AG04450 (cell line): ENCODE measurements at regions of chr3 and their contacts with region 1.

Region 1: GRCh38 chr3:120417272-120417911 is 33.4 kb downstream of the FSTL1 start:
- DNase-seq: peak; percentile 97
- H3K4me3 ChIP-seq: peak overlapping the region; percentile 32
- H3K27ac ChIP-seq: peak overlapping the region; percentile 62
- H3K27me3 ChIP-seq: no peaks in the 10 kb centered on the region
- CTCF ChIP-seq: peak; percentile 76

Region 2: GRCh38 chr3:119703820-119704531 is 713.4 kb before region 1 on chr3:
- CTCF ChIA-PET with region 1: no interaction called
- POLR2A ChIA-PET with region 1: no interaction called
- DNase-seq: no peak
- H3K4me3 ChIP-seq: no peak overlapping the region
- H3K27ac ChIP-seq: no peak overlapping the region
- H3K27me3 ChIP-seq: peaks cover 11% of the 10 kb centered on the region
- CTCF ChIP-seq: no peak

Region 3: DNA sequence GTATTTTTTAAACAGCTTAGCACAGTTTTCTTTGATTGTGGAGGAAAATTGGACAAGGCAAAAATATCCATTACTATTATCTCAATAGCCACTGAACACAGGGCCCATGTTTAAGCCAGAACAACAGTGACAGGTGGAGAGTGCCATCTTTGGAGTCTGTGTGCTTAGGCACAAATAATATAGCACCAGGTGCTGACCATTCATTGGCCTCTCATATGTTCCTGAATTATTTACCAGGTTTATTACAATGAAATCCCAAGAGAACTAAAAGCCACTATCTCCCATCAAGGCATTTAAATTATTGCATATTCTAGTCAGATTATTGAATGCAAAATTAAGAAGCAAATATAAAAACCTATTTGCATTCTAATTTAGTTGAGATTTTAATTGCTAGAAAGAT is 172.0 kb before region 1 on chr3:
- CTCF ChIA-PET with region 1: interaction called, 96 read pairs
- POLR2A ChIA-PET with region 1: no interaction called
- DNase-seq: no peak
- H3K4me3 ChIP-seq: no peak overlapping the region
- H3K27ac ChIP-seq: no peak overlapping the region
- H3K27me3 ChIP-seq: no peaks in the 10 kb centered on the region
- CTCF ChIP-seq: no peak

Region 4: DNA sequence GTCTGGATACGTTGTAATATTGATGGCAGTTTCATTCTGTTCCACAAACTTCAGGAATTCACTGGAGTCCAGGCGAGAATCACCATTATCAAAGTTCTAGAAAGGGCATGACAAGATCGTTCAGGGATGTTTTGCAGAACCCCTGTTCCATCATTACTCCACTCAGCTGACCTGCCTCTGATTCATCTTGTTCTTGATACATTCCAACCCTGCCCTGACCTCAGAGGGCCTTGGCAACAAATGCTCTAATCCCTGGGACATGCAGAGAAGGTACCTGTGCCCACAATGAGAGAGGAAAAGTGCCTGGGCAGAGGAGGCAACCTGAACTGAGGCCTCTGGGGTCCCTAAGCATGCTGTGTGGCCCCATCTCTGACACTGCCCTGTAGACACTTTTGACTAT is 12.5 kb before region 1 on chr3:
- CTCF ChIA-PET with region 1: interaction called, 34 read pairs
- POLR2A ChIA-PET with region 1: no interaction called
- DNase-seq: no peak
- H3K4me3 ChIP-seq: no peak overlapping the region
- H3K27ac ChIP-seq: no peak overlapping the region
- H3K27me3 ChIP-seq: no peaks in the 10 kb centered on the region
- CTCF ChIP-seq: no peak

Region 5: DNA sequence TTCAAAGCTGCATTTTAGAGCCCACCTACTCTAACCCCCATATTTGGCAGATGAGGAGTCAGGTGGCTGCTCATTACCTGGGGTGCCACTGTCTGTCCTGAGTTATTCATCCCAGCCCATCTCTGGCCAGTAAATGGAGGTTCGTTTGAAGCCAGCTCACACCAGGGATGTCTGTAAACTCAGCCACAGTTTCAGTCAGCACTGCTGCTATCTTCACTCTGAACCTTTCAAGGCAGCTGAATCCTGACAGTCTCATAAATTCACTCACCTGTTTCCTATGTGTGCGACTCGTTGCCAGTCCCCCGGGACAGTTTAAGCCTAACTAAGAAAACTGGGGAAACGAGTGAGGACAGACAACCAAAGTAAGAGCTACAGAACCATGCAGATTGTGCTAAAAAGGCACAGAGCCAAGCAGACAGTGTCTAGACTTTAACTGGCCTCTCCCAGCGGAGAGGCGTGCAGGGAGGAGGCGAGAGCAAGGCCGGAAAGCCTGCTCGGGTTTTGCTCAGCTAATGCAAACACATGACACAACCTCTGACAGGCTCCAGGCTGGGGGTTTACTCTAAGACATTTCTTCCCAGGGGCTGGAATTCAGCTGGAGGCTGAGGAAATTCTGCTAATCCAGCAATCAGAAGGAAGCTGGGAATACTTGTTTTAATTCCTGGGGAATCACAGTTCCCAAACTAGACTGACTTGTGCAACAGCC is 21.4 kb after region 1 on chr3:
- CTCF ChIA-PET with region 1: interaction called, 42 read pairs
- POLR2A ChIA-PET with region 1: interaction called, 5 read pairs
- DNase-seq: peak; percentile 71
- H3K4me3 ChIP-seq: no peak overlapping the region; the same call in 1 of the 2 replicates
- H3K27ac ChIP-seq: peak overlapping the region; percentile 82
- H3K27me3 ChIP-seq: no peaks in the 10 kb centered on the region
- CTCF ChIP-seq: no peak

Region 6: DNA sequence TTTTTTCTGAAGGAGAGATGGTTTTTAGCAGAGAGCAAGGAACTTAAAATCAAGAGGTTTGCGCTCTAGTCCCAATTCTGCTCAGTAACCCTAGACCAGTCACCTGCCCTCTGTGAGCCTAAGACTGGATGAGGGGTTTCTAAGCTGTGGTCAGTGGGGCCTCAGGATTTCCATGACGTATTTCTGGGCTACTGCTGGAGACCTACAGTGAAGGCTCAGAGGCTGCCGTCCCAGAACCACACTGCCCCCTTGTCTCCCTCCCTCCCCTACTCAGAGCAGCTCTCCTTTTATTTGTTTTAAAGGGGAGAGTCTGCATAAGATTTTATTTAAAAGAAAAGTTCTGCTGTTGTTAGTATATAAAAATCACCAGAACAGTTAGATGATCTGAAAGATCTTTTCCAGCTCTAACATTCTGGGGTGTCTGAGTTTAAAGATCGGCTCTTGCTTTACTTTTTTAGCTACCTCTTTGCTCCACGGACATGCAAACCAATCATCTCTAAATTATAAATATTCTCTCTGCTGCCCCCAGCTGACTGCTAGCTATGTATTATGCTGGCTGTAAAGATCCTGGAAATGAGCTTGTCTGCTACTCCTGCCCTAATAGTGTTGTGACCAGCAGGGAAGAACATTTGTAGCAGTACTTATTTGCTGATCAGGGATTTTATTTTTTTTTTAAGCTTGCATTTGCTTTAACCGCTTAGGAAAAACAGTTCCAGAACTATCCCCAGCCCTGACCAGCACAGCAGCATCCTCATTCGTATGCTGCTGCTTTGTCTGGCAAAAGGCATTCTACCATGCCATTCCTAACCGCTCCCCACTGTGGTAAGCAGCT is 150.2 kb after region 1 on chr3:
- CTCF ChIA-PET with region 1: interaction called, 13 read pairs
- POLR2A ChIA-PET with region 1: no interaction called
- DNase-seq: no peak
- H3K4me3 ChIP-seq: peak overlapping the region; percentile 0; the same call in 1 of the 2 replicates
- H3K27ac ChIP-seq: no peak overlapping the region
- H3K27me3 ChIP-seq: no peaks in the 10 kb centered on the region
- CTCF ChIP-seq: peak; percentile 45

Region 7: DNA sequence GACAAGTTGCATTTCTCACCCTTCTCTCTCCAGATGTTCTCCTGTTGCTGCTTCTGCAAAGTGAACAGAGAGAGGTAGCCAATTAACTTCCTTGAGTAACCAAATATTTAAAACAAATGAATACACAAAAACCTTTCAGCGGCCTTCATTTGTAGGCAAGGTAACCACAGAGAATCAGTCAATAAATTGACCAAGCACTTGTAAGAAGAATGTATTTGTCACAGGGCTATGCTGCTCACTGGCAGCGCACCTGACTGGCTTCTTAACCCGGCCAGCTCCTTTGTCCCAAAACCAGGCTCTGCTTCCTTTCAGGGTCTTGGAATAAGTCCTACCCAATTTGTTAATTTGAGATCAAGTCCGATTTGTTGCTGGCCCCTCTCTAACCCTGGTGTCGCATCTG is 447.1 kb after region 1 on chr3:
- CTCF ChIA-PET with region 1: no interaction called
- POLR2A ChIA-PET with region 1: no interaction called
- DNase-seq: no peak
- H3K4me3 ChIP-seq: no peak overlapping the region
- H3K27ac ChIP-seq: no peak overlapping the region
- H3K27me3 ChIP-seq: no peaks in the 10 kb centered on the region
- CTCF ChIP-seq: no peak